Cardiac septum (tissue), 1 donor: ENCODE measurements at regions of chr16 and their contacts with region 1.

Region 1: GRCh38 chr16:30786936-30787612 is at the start of gene ZNF629:
- DNase-seq: peak; percentile 82
- total RNA-seq, gene ZNF629: 22.7 TPM

Region 2: GRCh38 chr16:30628627-30629540 is 158.2 kb before region 1 on chr16:
- intact Hi-C with region 1: no loop called
- DNase-seq: peak; percentile 93

Region 3: GRCh38 chr16:30805370-30806169 is 18.5 kb after region 1 on chr16:
- intact Hi-C with region 1: loop called (anchors 1 kb)
- DNase-seq: peak; percentile 93

Region 4: DNA sequence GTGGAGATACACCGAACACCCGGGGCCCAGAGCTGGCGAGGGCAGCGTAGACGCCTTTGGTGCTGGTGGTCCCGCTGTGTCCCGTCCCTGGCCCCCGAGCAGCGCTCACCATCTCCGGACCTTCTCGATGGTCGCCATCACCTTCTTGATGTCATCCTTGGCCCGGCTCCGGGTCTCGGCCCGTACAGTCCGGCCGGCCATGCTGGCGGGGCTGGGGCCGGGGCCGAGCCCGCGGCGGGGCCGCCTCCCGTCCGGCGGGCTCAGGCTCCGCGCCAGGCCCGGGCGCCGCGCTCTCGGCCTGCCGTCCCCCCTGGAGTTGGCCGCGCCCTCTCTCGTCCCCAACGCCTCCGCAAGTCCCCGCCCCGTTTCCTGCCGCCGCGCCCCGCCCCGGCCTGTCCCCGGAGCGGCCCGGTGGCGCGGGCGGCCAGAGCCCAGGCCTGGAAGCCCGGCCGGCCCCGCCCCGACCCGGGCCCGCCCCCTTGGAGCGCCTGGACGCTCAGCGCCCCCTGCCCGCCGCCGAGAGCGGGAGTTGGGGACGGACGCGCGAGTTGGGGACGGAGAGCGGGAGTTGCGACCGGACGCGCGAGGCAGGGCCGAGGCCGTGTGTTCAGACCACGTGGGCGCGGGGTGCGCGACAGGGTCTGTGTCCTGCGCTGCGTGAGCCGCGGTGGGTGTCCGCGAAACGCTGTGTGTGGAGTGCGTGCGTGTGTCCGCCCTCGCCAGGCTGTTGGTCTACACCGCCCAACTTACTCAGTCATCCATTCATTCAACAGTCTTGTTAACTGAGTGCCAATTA is 106.9 kb after region 1 on chr16 and contains the start of gene BCL7C:
- intact Hi-C with region 1: loop called (anchors 5 kb)
- DNase-seq: peak; percentile 97
- total RNA-seq, gene BCL7C: 27.6 TPM